Right ventricle myocardium inferior (tissue), 1 donor: ENCODE measurements at regions of chr2 and their contacts with region 1.

Region 1: GRCh38 chr2:74391580-74392448 is 11.7 kb upstream of the DCTN1 start:
- DNase-seq: peak; percentile 97
- ATAC-seq: peak; percentile 86

Region 2: GRCh38 chr2:74267068-74267467 is 124.7 kb before region 1 on chr2:
- intact Hi-C with region 1: loop called (anchors 5 kb)
- DNase-seq: no peak
- ATAC-seq: no peak

Region 3: GRCh38 chr2:74544634-74545033 is 152.8 kb after region 1 on chr2:
- intact Hi-C with region 1: no loop called
- DNase-seq: no peak
- ATAC-seq: no peak